Activated naive CD4-positive, alpha-beta T cell treated with anti-CD3 and anti-CD28 coated beads for 36 hours (primary cell): ENCODE measurements at regions of chr1 and their contacts with region 1.

Region 1: DNA sequence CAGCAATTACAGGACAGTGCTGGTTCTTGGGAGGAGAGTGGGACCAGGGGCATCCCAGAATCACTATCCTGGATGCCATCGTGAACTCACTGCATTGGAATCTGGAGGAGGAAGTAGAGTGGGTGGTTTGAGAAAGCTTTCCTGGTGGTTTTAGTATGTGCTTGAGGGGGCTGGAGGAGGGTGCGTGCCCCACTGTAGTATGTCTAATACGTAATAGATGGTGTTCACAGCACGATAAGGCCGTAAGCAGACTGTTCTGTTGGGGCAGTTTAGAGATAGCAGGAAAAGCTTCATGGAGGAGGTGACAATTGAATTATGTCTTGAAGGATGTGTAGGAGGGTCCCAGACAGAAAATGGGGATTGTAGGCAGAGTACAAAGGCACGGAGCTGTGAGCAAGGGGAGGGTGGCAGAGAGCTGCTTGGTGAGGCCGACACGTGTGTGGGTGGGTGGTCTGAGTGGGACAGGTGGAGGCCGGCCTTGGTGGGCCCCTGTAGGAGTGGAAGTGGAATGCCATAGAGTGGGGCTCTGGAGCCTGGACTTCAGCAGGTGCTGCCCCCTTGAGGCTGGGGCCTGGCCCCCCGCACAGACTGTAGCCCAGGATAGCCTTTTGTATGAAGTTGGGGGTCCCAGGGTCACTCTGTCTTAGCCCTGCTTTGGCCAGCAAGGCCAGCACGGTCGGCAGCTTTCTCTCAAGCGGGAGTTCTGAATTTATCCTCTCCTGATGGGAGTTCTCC is 37.0 kb downstream of the IL6R start:
- DNase-seq: no peak
- H3K4me3 Mint-ChIP-seq: no peak overlapping the region
- H3K27ac Mint-ChIP-seq: no peak overlapping the region
- H3K4me1 Mint-ChIP-seq: peaks cover 72% of the 10 kb centered on the region
- H3K27me3 Mint-ChIP-seq: no peaks in the 10 kb centered on the region

Region 2: GRCh38 chr1:154419620-154420571 is 22.3 kb before region 1 on chr1:
- CTCF ChIA-PET with region 1: interaction called, 7 read pairs
- intact Hi-C with region 1: loop called (anchors 1 kb)
- DNase-seq: peak; percentile 90
- H3K4me3 Mint-ChIP-seq: peak overlapping the region; percentile 52
- H3K27ac Mint-ChIP-seq: peak overlapping the region; percentile 88
- H3K4me1 Mint-ChIP-seq: peaks cover 85% of the 10 kb centered on the region
- H3K27me3 Mint-ChIP-seq: no peaks in the 10 kb centered on the region

Region 3: GRCh38 chr1:154463512-154463990 is 21.4 kb after region 1 on chr1:
- CTCF ChIA-PET with region 1: interaction called, 4 read pairs
- intact Hi-C with region 1: loop called (anchors 1 kb)
- DNase-seq: peak; percentile 89
- H3K4me3 Mint-ChIP-seq: no peak overlapping the region
- H3K27ac Mint-ChIP-seq: peak overlapping the region; percentile 78
- H3K4me1 Mint-ChIP-seq: peaks cover 73% of the 10 kb centered on the region
- H3K27me3 Mint-ChIP-seq: no peaks in the 10 kb centered on the region